Activated CD4-positive, alpha-beta T cell treated with anti-CD3 and anti-CD28 coated beads for 36 hours (primary cell): ENCODE measurements at regions of chr15 and their contacts with region 1.

Region 1: DNA sequence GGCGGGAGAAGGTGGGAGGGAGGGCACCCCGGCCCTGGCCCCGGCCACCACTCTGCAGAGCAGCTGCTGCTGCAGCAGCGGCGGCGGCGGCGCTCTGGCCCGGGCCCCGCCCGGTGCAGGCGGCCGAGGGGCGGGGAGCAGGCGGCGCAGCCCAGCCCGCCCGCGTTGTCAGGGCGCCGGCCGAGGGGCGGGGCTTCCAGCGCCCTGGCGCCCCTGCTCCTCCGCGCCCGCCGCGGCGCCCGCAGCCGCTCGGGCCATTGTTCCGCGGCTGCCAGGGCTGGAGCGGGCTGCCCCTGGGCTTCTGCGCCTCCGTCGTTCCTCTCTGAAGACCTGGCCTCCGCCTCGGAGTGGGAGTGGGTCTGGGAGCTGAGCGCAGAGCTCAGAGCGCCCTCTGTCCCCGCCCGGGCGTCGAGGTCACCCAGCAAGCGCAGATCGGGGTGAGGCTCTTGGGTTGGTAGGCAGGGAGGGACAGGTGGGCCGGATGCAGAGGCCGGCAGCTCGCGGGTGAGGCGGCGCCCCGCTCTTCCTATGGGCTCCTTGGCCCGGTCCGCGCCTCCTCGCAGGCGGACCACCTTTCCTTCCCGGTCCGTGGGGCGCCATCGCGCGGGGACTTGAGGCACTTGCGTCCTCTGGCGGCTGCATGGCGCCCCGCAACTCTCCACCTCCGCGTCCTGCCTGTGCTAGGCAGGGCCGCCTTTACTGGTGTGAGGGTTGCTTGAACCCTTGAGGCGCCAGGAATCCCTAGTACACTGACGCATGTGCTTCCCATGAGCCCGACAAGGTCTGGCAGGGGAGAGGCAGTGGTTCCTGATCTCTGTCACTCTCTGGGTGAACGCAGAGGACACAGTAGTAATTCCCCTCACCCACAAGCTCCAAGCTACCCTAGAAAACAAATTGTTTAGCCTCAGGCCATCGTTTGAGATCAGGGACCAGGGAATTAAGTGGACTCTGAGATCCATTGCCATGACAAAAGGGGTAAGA is at the start of gene LPCAT4:
- DNase-seq: peak; percentile 94
- ATAC-seq: peak; percentile 84
- H3K4me3 Mint-ChIP-seq: peak within 1 kb of the TSS; percentile 99
- H3K27ac Mint-ChIP-seq: peak within 1 kb of the TSS; percentile 89
- H3K4me1 Mint-ChIP-seq: peaks cover 36% of the 10 kb centered on the region
- H3K27me3 Mint-ChIP-seq: no peaks in the 10 kb centered on the region
- total RNA-seq, gene LPCAT4: 44.4 to 52.7 TPM

Region 2: DNA sequence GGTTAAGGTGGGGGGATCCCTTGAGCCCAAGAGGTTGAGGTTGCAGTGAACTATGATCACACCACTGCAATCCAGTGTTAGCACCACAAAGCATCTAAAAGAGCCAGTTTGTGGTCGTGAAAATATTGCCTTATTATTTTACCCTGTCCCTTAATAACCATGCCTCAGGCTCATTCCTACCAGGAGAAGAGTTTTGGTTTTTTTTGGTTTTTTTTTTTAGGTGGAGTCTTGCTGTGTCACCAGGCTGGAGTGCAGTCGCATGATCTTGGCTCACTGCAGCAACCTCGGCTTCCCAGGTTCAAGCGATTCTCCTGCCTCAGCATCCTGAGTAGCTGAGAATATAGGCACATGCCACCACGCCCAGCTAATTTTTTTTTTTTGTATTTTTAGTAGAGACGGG is 310.5 kb before region 1 on chr15:
- CTCF ChIA-PET with region 1: interaction called, 4 read pairs
- POLR2A ChIA-PET with region 1: no interaction called
- intact Hi-C with region 1: loop called in 1 of 2 experiments (anchors 1 kb)
- DNase-seq: no peak
- ATAC-seq: no peak
- H3K4me3 Mint-ChIP-seq: no peak overlapping the region
- H3K27ac Mint-ChIP-seq: no peak overlapping the region
- H3K4me1 Mint-ChIP-seq: peaks cover 4% of the 10 kb centered on the region
- H3K27me3 Mint-ChIP-seq: no peaks in the 10 kb centered on the region

Region 3: GRCh38 chr15:34101366-34102175 is 265.8 kb before region 1 on chr15 and contains the starts of genes EMC7 and PGBD4:
- CTCF ChIA-PET with region 1: interaction called, 4 read pairs
- POLR2A ChIA-PET with region 1: interaction called, 5 read pairs
- intact Hi-C with region 1: loop called in 1 of 2 experiments (anchors 1 kb)
- DNase-seq: peak; percentile 99
- ATAC-seq: peak; percentile 99
- H3K4me3 Mint-ChIP-seq: peak within 1 kb of the TSS; percentile 100
- H3K27ac Mint-ChIP-seq: peak within 1 kb of the TSS; percentile 99
- H3K4me1 Mint-ChIP-seq: peaks cover 40% of the 10 kb centered on the region
- H3K27me3 Mint-ChIP-seq: no peaks in the 10 kb centered on the region
- total RNA-seq, gene EMC7: 46.7 to 48.5 TPM
- total RNA-seq, gene PGBD4: 2.3 to 2.4 TPM

Region 4: GRCh38 chr15:34209421-34210282 is 157.7 kb before region 1 on chr15 and contains the start of gene KATNBL1:
- CTCF ChIA-PET with region 1: interaction called, 10 read pairs
- POLR2A ChIA-PET with region 1: interaction called, 3 read pairs
- intact Hi-C with region 1: loop called (anchors 1 to 5 kb)
- DNase-seq: peak; percentile 99
- ATAC-seq: peak; percentile 94
- H3K4me3 Mint-ChIP-seq: peak within 1 kb of the TSS; percentile 89
- H3K27ac Mint-ChIP-seq: peak within 1 kb of the TSS; percentile 80
- H3K4me1 Mint-ChIP-seq: peaks cover 32% of the 10 kb centered on the region
- H3K27me3 Mint-ChIP-seq: no peaks in the 10 kb centered on the region
- total RNA-seq, gene KATNBL1: 45.0 to 47.5 TPM

Region 5: DNA sequence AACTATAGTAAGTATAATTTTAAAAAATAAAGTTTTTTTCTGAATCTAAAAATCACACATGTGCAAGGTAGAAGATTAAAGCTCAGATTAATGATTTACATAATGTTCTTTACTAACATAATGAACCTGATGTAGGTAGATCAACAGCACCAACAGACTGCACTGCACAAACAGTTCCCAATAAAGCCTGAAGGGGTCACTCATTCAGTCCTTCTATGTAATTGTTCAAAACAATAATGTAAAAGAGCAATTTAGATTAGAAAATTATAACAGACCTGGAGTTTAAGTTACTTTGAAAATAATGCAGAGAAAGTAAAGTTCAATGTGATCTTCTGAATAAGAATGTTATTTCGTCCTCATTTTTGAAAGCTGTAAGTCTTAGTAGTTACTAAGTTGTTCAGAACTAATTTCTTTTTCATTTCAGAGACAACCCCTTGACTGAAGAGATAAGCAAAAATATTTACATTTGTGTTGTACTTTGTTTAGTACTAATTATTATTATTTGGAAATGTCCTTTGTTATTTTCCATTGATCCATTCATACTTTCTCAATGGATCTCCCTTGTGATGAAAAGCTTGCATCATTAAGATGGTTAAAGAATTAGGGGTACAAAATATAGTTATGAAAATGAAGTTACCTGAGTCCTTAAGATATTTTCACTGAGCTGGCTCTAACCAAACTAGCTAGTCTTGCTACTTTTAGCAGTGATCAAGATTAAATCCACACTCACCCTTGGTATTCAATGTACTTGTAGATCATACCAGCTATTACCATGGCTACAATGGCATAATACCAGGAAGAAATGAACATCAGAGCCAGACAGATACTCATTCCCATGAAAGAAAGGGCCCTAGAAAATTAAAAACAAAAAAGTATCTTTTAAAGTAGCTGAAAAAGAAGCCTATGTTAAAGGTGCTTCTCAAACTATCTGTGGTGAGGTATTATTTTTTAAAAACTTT is 125.7 kb before region 1 on chr15:
- CTCF ChIA-PET with region 1: interaction called, 28 read pairs
- POLR2A ChIA-PET with region 1: interaction called, 3 read pairs
- intact Hi-C with region 1: loop called (anchors 1 kb)
- DNase-seq: peak; percentile 35
- ATAC-seq: peak; percentile 68
- H3K4me3 Mint-ChIP-seq: no peak overlapping the region
- H3K27ac Mint-ChIP-seq: peak overlapping the region; percentile 39
- H3K4me1 Mint-ChIP-seq: peaks cover 33% of the 10 kb centered on the region
- H3K27me3 Mint-ChIP-seq: no peaks in the 10 kb centered on the region

Region 6: GRCh38 chr15:34342737-34343575 is 24.4 kb before region 1 on chr15 and contains the starts of genes NOP10 and NUTM1:
- CTCF ChIA-PET with region 1: interaction called, 29 read pairs
- POLR2A ChIA-PET with region 1: interaction called, 3 read pairs
- intact Hi-C with region 1: loop called (anchors 1 kb)
- DNase-seq: peak; percentile 97
- ATAC-seq: peak; percentile 91
- H3K4me3 Mint-ChIP-seq: no peak within 1 kb of the TSS
- H3K27ac Mint-ChIP-seq: peak within 1 kb of the TSS; percentile 88
- H3K4me1 Mint-ChIP-seq: peaks cover 30% of the 10 kb centered on the region
- H3K27me3 Mint-ChIP-seq: no peaks in the 10 kb centered on the region
- total RNA-seq, gene NOP10: 217 to 313 TPM
- total RNA-seq, gene NUTM1: not detected

Region 7: GRCh38 chr15:34987985-34988873 is 620.8 kb after region 1 on chr15 and contains the start of gene ZNF770:
- CTCF ChIA-PET with region 1: no interaction called
- POLR2A ChIA-PET with region 1: no interaction called
- intact Hi-C with region 1: loop called in 1 of 2 experiments (anchors 10 kb)
- DNase-seq: peak; percentile 88
- ATAC-seq: peak; percentile 87
- H3K4me3 Mint-ChIP-seq: peak within 1 kb of the TSS; percentile 97
- H3K27ac Mint-ChIP-seq: peak within 1 kb of the TSS; percentile 98
- H3K4me1 Mint-ChIP-seq: peaks cover 35% of the 10 kb centered on the region
- H3K27me3 Mint-ChIP-seq: no peaks in the 10 kb centered on the region
- total RNA-seq, gene ZNF770: 64.1 to 65.1 TPM